ENCODE measurements at regions of chrX and their contacts with region 1.

Region 1: GRCh38 chrX:153333768-153334645 is at the start of gene ZNF275:
- DNase-seq: peak; percentile 78
- H3K4me3 Mint-ChIP-seq: peak within 1 kb of the TSS; percentile 85
- H3K27ac Mint-ChIP-seq: peak within 1 kb of the TSS; percentile 80
- H3K4me1 Mint-ChIP-seq: peaks cover 42% of the 10 kb centered on the region
- H3K27me3 Mint-ChIP-seq: no peaks in the 10 kb centered on the region
- total RNA-seq, gene ZNF275: 10.8 to 11.5 TPM

Region 2: GRCh38 chrX:152136312-152136711 is 1197.7 kb before region 1 on chrX:
- CTCF ChIA-PET with region 1: no interaction called
- intact Hi-C with region 1: no loop called
- DNase-seq: no peak
- H3K4me3 Mint-ChIP-seq: no peak overlapping the region
- H3K27ac Mint-ChIP-seq: no peak overlapping the region
- H3K4me1 Mint-ChIP-seq: no peaks in the 10 kb centered on the region
- H3K27me3 Mint-ChIP-seq: no peaks in the 10 kb centered on the region

Region 3: DNA sequence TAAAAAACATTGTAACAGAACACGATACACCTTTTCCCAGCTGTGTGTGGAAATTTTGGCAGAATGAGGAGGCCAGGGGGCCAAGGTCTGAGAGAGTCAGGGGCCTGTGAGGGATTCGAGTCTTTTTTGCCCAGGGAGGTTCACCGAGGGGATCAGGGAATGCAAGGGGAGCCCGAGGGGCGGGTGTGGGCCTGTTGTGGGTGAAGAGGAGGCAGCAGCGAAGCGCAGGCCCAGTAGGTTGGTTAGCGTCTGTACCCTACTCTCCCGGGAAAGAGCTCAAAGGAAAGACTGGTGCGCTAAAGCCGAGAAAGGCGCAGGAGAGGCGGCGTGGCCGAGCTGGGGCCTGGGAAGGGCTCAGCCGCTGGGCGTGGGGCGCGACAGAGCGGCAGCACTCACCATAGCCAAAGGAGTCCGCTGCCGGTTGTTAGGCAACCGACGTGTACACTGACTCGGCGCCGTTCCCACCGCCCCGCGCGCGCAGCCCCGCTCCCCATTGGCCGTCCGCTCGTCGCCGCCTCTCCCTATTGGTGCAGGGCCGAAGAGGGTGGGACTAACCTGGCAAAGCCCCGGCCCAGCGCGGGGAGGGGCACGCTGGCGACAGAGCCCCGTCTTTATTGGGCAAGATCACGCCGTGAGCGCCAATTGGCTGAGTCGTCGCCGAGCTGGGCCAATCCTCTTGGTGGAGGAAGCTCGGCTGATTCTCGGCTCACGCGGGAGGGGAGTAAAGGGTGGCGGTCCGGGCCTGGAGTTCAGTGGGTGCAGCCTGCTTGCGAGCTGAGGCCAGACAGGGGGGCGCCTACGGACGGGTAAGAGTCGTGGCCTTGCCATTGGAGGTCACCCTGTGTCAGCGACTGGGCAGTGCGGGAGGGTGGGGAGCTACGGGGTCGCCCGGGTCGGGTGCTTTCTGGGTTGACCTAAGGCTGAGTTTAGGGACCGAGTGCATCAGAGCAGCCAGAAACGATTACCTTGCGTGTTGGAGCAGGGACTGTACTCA is 503.4 kb before region 1 on chrX and contains the starts of genes CETN2 and NSDHL:
- CTCF ChIA-PET with region 1: no interaction called
- intact Hi-C with region 1: loop called (anchors 10 kb)
- DNase-seq: peak; percentile 95
- H3K4me3 Mint-ChIP-seq: peak within 1 kb of the TSS; percentile 88
- H3K27ac Mint-ChIP-seq: peak within 1 kb of the TSS; percentile 81
- H3K4me1 Mint-ChIP-seq: peaks cover 26% of the 10 kb centered on the region
- H3K27me3 Mint-ChIP-seq: no peaks in the 10 kb centered on the region
- total RNA-seq, gene CETN2: 10.1 to 11.9 TPM
- total RNA-seq, gene NSDHL: 13.3 to 16.2 TPM

Region 4: DNA sequence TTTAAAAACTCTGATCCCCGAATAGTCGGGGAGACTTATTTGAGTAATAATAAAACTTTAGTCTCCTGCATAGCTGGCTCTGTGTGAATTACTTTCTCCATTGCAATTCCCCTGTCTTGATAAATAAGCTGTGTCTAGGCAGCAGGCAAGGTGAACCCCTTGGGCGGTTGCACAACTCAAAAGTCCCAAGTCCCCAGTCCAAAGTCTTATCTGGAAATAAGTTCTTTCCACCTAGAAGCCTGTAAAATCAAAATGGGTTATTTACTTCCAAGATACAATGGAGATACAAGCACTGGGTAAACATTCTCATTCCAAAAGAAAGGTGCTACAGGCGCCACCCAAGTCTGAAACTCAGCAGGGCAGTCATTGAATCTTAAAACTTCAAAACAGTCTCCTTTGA is 330.0 kb before region 1 on chrX:
- CTCF ChIA-PET with region 1: no interaction called
- intact Hi-C with region 1: no loop called
- DNase-seq: no peak
- H3K4me3 Mint-ChIP-seq: no peak overlapping the region
- H3K27ac Mint-ChIP-seq: no peak overlapping the region
- H3K4me1 Mint-ChIP-seq: no peaks in the 10 kb centered on the region
- H3K27me3 Mint-ChIP-seq: peaks cover 7% of the 10 kb centered on the region

Region 5: GRCh38 chrX:153370293-153371055 is 36.5 kb after region 1 on chrX:
- CTCF ChIA-PET with region 1: no interaction called
- intact Hi-C with region 1: loop called (anchors 2 kb)
- DNase-seq: no peak
- H3K4me3 Mint-ChIP-seq: no peak overlapping the region
- H3K27ac Mint-ChIP-seq: no peak overlapping the region
- H3K4me1 Mint-ChIP-seq: peaks cover 11% of the 10 kb centered on the region
- H3K27me3 Mint-ChIP-seq: no peaks in the 10 kb centered on the region

Region 6: GRCh38 chrX:153411255-153411987 is 77.4 kb after region 1 on chrX and contains the start of gene ZFP92:
- CTCF ChIA-PET with region 1: no interaction called
- intact Hi-C with region 1: loop called (anchors 5 kb)
- DNase-seq: peak; percentile 29
- H3K4me3 Mint-ChIP-seq: peak within 1 kb of the TSS; percentile 62
- H3K27ac Mint-ChIP-seq: no peak within 1 kb of the TSS
- H3K4me1 Mint-ChIP-seq: peaks cover 7% of the 10 kb centered on the region
- H3K27me3 Mint-ChIP-seq: no peaks in the 10 kb centered on the region
- total RNA-seq, gene ZFP92: 0.59 to 0.74 TPM

Region 7: GRCh38 chrX:154097597-154098541 is 763.9 kb after region 1 on chrX and contains the start of gene MECP2:
- CTCF ChIA-PET with region 1: no interaction called
- intact Hi-C with region 1: loop called (anchors 10 kb)
- DNase-seq: peak; percentile 94
- H3K4me3 Mint-ChIP-seq: peak within 1 kb of the TSS; percentile 89
- H3K27ac Mint-ChIP-seq: peak within 1 kb of the TSS; percentile 94
- H3K4me1 Mint-ChIP-seq: peaks cover 44% of the 10 kb centered on the region
- H3K27me3 Mint-ChIP-seq: no peaks in the 10 kb centered on the region
- total RNA-seq, gene MECP2: 47.1 to 50.2 TPM

Measured in activated naive CD4-positive, alpha-beta T cell treated with anti-CD3 and anti-CD28 coated beads for 36 hours (primary cell).